Head of caudate nucleus (tissue), 42 donors: ENCODE measurements at regions of chr6 and their contacts with region 1.

Region 1: DNA sequence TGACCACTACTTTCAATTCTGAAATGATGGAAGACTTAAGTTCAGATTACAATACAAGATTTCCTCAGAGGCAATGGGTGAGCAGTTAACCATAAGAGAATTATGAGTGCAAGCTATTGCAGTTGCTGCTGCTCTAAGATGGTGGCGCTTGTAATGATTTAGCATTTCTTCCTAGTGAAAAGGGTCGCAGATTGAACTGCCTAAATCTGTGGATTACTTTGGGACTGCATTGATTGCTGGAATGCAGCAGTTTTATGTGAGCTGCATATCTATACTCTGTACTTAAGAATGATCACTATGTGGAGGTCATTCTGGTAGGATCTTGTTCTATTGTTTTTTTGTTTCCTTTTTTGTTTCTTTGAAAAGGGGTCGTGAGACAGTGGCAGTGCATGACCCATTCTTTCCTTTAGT is 5.3 kb downstream of the SCAF8 start:
- DNase-seq: no peak

Region 2: DNA sequence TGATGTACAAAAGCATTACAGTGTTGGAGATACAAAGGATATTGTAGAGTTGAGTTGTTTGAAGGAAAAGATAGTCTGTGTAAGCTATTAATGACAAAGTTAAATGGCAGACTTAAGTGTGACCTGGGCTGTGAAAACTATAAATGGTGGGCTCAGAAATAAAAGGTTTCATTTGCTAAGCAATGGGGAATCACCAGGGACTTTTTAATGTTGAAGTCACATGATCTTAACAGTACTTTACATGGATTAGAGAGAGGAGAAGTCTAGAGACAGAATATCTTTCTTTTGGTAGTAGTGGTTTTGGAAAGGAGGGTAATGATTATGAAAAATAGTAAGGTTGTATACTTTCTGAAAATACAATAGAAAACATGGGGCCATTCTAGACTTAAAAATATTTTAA is 61.8 kb after region 1 on chr6:
- intact Hi-C with region 1: loop called (anchors 5 kb)
- DNase-seq: no peak